ENCODE measurements at regions of chr11 and their contacts with region 1.

Region 1: GRCh38 chr11:62123669-62124185 is at the start of gene INCENP:
- DNase-seq: peak; percentile 98
- H3K4me3 Mint-ChIP-seq: peak within 1 kb of the TSS; percentile 88
- H3K27ac Mint-ChIP-seq: peak within 1 kb of the TSS; percentile 81
- H3K4me1 Mint-ChIP-seq: peaks cover 30% of the 10 kb centered on the region
- H3K27me3 Mint-ChIP-seq: peaks cover 3% of the 10 kb centered on the region
- total RNA-seq, gene INCENP: 95.0 and 102 TPM in 2 replicates

Region 2: DNA sequence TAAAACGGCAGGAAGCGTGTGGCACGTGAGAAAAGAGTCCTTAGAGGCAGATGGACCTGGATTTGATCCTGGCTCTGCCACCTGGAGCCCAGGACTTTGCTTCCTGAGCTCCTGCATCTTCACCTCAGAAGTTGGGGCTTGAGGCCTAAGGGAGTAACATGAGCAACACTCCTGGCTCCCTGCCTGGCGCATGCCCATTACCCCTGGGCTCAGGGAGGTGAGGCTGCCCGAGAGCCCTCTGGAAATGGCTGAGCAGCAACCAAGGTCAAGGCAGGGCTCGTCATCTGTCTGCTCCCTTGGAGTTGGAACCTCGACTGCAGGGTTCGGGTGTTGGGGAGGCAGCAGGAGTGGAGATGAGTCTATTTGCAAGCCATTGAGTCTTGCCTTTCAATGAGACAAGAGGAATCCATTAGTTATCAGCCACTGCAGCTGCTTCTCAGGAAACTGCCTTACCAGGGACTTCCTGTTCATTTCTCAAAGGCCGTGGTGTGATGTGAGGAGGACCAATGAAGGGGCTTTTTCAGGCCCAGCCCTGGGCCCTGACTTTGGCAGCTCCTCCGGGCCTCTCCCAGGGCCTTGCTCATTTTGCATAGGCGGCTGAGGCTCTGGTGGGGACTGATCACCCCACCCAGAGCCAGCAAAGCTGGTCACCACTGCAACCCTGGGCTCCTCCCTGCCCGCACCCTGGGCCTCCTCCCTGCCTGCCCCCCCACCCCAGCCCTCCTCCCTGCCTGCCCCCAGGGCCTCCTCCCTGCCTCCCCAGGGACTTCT is 289.3 kb before region 1 on chr11:
- intact Hi-C with region 1: loop called (anchors 5 kb)
- DNase-seq: peak; percentile 92
- H3K4me3 Mint-ChIP-seq: peak overlapping the region; percentile 71
- H3K27ac Mint-ChIP-seq: peak overlapping the region; percentile 93
- H3K4me1 Mint-ChIP-seq: peaks cover 59% of the 10 kb centered on the region
- H3K27me3 Mint-ChIP-seq: no peaks in the 10 kb centered on the region

Region 3: GRCh38 chr11:62069986-62070919 is 53.5 kb before region 1 on chr11:
- intact Hi-C with region 1: no loop called
- DNase-seq: no peak
- H3K4me3 Mint-ChIP-seq: no peak overlapping the region
- H3K27ac Mint-ChIP-seq: no peak overlapping the region
- H3K4me1 Mint-ChIP-seq: peaks cover 2% of the 10 kb centered on the region
- H3K27me3 Mint-ChIP-seq: peaks cover 2% of the 10 kb centered on the region